ENCODE measurements at regions of chr9 and their contacts with region 1.

Region 1: DNA sequence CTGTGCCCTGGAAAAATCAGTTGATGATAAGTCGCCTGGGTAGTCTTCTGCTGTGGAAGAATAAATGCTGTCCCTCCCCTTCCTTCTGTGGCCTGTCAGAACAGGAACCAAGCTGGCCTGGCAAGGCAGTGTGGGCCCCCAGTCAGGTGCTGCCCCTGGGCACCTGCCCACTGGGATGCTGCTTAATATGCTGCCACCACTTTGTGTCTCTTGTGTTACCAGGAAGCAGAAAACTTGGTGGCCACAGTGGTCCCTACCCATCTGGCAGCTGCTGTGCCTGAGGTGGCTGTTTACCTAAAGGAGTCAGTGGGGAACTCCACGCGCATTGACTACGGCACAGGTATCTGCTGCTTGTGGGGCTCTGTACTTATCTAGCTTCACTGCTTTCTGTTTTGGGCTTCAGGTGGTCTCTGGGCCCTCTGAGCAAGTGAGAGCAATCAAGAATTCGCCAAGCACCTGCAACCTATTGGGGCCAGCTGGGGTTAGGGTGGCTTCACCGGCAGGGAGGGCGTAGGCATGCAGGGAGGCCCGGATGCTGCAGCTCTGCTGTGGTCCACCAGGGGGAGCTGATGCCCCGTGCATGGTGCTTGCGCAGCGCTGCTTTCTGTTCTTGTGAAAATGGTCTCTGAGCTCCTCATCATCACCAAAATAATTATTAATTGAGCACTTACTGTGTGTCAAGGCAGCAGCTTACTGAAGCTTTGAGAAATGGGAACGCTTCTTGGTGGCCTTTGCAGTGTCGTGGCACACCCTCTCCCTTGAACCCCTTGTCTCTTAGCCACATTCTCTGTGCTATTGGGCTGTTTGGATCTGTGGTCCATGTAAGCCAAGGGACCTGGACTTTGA is 20.3 kb downstream of the PTPA start:
- DNase-seq: peak; percentile 89
- ATAC-seq: peak; percentile 100
- H3K4me3 Mint-ChIP-seq: no peak overlapping the region
- H3K27ac Mint-ChIP-seq: no peak overlapping the region
- H3K4me1 Mint-ChIP-seq: peaks cover 7% of the 10 kb centered on the region
- H3K27me3 Mint-ChIP-seq: no peaks in the 10 kb centered on the region
- CTCF ChIP-seq: peak; percentile 98

Region 2: DNA sequence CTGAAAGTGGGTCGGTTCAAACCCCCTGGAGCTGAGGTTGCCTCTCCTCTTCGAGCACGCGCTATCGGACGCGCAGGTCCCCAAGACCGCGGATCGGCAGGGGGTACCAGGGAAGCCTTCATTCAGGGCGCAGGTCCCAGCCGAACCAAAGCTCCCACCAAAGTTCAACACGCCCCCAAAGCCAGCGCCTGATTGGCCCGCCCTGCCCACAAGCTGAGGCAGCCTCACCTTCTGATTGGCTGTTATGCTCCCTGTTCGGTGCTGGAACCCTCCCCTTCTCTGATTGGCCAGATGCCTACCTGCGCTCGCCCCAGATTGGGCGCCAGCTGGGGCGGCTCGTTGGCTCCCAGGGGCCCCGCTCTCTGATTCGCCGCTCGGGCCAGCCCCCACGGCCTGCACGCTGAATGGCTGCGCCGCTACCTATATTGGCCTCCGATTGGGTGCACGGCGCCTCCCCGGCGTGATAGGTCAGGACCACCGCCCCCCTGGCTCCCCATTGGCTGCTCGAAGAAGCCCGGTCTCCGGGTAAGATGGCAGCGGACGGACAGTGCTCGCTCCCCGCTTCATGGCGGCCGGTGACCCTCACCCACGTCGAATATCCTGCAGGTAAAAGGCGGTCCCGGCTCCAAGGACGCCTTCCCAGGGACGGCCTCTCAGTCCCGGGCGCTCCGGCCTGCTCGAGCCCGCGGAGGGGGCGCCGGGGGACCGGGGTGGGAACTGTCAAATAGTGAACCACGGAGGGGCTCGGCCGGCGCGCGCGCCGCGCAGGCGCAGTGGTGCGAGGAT is 50.7 kb before region 1 on chr9 and contains the start of gene DOLPP1:
- CTCF ChIA-PET with region 1: interaction called, 10 read pairs
- POLR2A ChIA-PET with region 1: no interaction called
- intact Hi-C with region 1: no loop called
- DNase-seq: peak; percentile 99
- ATAC-seq: peak; percentile 96
- H3K4me3 Mint-ChIP-seq: peak within 1 kb of the TSS; percentile 88
- H3K27ac Mint-ChIP-seq: peak within 1 kb of the TSS; percentile 78
- H3K4me1 Mint-ChIP-seq: peaks cover 21% of the 10 kb centered on the region
- H3K27me3 Mint-ChIP-seq: no peaks in the 10 kb centered on the region
- CTCF ChIP-seq: no peak
- total RNA-seq, gene DOLPP1: 12.7 to 15.2 TPM

Region 3: DNA sequence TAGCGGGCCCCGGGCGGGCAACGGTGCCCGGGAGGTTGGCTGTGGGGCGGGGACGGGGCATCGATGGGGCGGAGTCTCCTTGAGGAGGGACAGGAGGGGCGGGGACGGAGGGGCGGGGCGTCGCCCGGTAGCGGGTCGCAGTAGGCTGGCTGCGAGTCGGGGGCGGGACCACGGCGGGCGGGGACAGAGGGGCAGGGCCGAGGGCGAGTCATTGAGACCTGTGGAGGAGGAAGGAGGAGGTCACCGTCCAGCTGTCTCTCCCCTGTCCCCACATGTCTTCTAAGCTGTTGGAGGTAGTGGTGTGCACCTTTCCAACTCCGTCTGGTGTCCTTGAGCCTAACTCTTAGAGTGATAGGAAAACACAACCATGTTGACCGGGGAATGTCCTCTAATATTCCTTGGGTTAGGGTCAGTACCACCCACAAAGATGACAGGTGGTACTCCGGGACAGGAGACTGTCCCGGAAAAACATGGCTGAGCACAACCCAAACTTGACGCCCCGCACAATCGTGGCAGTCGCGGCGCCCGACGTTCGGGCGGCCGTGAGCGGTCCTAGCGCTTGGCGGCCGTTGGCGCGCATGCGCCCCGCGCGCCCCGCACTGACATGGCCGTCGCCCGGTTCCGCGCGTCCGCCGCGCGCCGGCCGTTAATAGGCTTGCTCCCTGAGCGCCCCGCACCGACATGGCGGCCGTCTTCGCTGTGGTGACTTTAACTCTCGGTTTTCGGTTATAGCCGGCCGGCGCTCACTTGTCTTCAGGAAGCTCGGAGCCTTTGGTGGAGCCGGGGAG is 20.6 kb before region 1 on chr9 and contains the starts of genes CRAT and PTPA:
- CTCF ChIA-PET with region 1: interaction called, 40 read pairs
- POLR2A ChIA-PET with region 1: interaction called, 4 read pairs
- intact Hi-C with region 1: no loop called
- DNase-seq: peak; percentile 98
- ATAC-seq: peak; percentile 91
- H3K4me3 Mint-ChIP-seq: peak within 1 kb of the TSS; percentile 87
- H3K27ac Mint-ChIP-seq: peak within 1 kb of the TSS; percentile 96
- H3K4me1 Mint-ChIP-seq: peaks cover 29% of the 10 kb centered on the region
- H3K27me3 Mint-ChIP-seq: no peaks in the 10 kb centered on the region
- CTCF ChIP-seq: no peak
- total RNA-seq, gene CRAT: 11.8 to 12.7 TPM
- total RNA-seq, gene PTPA: 95.3 to 98.5 TPM

Region 4: DNA sequence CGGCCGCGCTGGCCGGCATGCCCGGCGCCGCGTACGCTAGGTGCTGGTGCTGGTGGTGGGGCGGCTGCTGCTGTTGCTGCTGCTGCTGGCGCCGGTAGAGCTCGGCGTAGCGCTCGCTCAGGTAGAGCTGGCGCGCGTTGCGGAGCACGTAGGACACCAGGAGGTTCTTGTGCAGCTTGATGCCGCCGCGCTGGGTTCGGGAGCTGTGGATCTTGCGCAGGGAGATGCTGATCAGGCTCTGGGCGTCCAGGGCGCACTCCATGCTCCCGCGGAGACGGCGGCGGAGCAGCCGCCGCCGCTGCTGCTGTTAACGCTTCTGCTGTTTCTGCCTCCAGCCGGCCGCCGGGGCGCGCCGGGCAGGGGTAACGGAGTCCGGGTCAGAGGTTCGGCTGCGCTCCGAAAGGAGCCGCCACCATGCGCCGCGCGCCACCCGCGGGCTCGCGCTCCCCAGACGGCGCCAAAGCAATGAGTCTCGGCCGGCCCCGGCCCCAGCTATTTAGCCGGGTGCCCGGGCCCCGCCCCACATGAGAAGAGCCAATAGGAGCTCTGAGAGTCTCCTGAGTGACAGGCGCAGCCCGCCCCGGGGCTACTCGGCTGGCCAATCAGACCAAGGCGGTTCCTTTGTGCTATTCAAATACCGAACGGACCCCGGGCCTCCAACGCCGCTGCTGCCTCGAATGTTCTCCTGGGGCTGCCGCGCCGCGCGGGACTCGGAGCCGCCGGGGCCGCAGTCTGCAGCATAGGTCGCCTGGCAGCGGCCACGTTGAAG is 46.5 kb after region 1 on chr9 and contains the start of gene IER5L:
- CTCF ChIA-PET with region 1: interaction called, 65 read pairs
- POLR2A ChIA-PET with region 1: interaction called, 3 read pairs
- intact Hi-C with region 1: no loop called
- DNase-seq: peak; percentile 96
- ATAC-seq: peak; percentile 86
- H3K4me3 Mint-ChIP-seq: peak within 1 kb of the TSS; percentile 89
- H3K27ac Mint-ChIP-seq: peak within 1 kb of the TSS; percentile 34
- H3K4me1 Mint-ChIP-seq: peaks cover 1% of the 10 kb centered on the region
- H3K27me3 Mint-ChIP-seq: peaks cover 6% of the 10 kb centered on the region
- CTCF ChIP-seq: no peak
- total RNA-seq, gene IER5L: 3.7 to 4.1 TPM

Region 5: GRCh38 chr9:129211704-129212103 is 80.2 kb after region 1 on chr9:
- CTCF ChIA-PET with region 1: no interaction called
- POLR2A ChIA-PET with region 1: no interaction called
- intact Hi-C with region 1: no loop called
- DNase-seq: no peak
- ATAC-seq: no peak
- H3K4me3 Mint-ChIP-seq: no peak overlapping the region
- H3K27ac Mint-ChIP-seq: no peak overlapping the region
- H3K4me1 Mint-ChIP-seq: peaks cover 30% of the 10 kb centered on the region
- H3K27me3 Mint-ChIP-seq: no peaks in the 10 kb centered on the region
- CTCF ChIP-seq: no peak

Region 6: DNA sequence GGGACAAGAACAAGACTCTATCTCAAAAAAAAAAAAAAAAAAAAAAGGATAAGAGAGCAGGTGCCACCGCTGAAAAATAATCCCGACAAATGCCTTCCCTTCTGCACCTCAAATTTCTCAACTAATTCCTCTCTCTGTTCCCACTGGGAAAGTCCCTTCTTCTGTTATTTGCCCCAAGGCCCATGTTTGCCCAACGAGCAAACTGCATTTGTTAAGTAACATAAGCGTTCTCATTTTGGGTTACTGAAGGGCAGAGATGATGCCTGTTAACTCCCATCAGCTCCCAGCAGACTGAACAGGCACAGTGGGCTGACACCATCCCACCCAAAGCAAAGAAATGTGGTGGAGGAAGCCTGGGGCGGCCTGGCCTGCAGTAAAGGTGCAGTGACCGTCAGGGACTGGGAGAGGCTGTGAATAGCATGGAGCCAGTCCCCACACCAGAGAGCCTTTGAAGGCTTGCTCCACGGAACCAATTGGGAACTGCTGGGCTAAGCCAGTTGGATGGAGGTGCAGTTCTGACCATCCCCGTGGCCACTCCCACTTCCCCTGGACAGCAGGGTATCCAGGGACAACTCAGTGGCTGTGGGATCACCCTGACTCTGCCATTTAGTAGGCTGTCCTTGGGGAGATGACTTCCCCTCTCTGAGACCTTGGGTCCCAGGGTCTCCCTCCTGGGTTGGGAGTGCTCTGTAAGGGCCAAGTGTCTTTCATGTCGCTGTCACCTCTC is 196.2 kb after region 1 on chr9:
- CTCF ChIA-PET with region 1: no interaction called
- POLR2A ChIA-PET with region 1: no interaction called
- intact Hi-C with region 1: no loop called
- DNase-seq: no peak
- ATAC-seq: no peak
- H3K4me3 Mint-ChIP-seq: no peak overlapping the region
- H3K27ac Mint-ChIP-seq: peak overlapping the region; percentile 62
- H3K4me1 Mint-ChIP-seq: peaks cover 24% of the 10 kb centered on the region
- H3K27me3 Mint-ChIP-seq: no peaks in the 10 kb centered on the region
- CTCF ChIP-seq: no peak

Region 7: GRCh38 chr9:129610473-129611301 is 479.2 kb after region 1 on chr9:
- CTCF ChIA-PET with region 1: interaction called, 19 read pairs
- POLR2A ChIA-PET with region 1: no interaction called
- intact Hi-C with region 1: loop called (anchors 5 kb)
- DNase-seq: peak; percentile 78
- ATAC-seq: peak; percentile 66
- H3K4me3 Mint-ChIP-seq: peak overlapping the region; percentile 62
- H3K27ac Mint-ChIP-seq: peak overlapping the region; percentile 59
- H3K4me1 Mint-ChIP-seq: peaks cover 32% of the 10 kb centered on the region
- H3K27me3 Mint-ChIP-seq: no peaks in the 10 kb centered on the region
- CTCF ChIP-seq: peak; percentile 99

Region 8: DNA sequence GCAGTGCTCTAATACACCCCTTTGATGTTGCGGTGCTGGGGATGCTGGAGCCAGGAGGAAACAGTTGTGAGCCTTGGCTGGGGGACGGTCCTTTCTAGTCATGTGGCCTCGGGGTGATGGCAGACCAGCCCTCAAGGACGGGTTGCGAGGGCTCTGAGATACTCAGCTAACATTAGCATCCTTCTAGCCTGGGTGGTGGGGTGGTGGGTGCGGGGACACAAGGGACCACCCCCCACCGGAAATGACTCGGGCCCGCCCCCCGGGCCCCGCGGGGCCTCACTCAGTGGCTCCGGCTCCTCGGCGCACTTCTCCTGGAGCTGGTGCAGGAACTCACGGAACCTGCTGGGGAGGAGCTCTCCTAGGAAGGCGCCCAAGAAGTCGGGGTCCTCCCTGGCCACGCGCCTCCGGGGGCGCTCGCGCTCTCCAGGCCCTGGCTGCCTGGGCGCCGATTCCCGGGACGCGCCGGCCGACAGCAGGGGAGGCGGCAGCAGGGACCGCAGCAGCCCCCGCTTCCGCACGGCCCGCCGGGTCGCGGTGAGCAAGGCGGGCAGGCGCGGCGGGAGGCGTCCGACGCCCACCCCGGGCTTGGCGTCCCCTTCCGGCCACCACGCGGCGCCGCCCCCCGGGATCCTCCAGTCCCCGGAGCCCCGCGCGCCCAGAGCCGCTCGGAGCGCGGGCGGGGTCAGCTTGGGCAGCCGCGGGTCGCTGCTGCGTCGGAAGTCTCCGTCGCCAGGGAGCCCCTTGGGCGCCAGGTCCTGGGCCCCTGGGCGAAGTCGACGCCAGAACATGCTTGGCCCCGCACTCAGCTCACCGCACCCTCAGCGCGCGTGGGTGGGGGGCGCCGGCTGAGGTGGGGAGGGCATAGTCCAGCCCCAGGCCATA is 488.5 kb after region 1 on chr9:
- CTCF ChIA-PET with region 1: interaction called, 55 read pairs
- POLR2A ChIA-PET with region 1: interaction called, 3 read pairs
- intact Hi-C with region 1: no loop called
- DNase-seq: no peak
- ATAC-seq: peak; percentile 12
- H3K4me3 Mint-ChIP-seq: no peak overlapping the region
- H3K27ac Mint-ChIP-seq: no peak overlapping the region
- H3K4me1 Mint-ChIP-seq: peaks cover 13% of the 10 kb centered on the region
- H3K27me3 Mint-ChIP-seq: peaks cover 19% of the 10 kb centered on the region
- CTCF ChIP-seq: peak; percentile 29

Measured in activated CD8-positive, alpha-beta T cell treated with anti-CD3 and anti-CD28 coated beads for 36 hours (primary cell).